ENCODE measurements at regions of chr2 and their contacts with region 1.

Region 1: DNA sequence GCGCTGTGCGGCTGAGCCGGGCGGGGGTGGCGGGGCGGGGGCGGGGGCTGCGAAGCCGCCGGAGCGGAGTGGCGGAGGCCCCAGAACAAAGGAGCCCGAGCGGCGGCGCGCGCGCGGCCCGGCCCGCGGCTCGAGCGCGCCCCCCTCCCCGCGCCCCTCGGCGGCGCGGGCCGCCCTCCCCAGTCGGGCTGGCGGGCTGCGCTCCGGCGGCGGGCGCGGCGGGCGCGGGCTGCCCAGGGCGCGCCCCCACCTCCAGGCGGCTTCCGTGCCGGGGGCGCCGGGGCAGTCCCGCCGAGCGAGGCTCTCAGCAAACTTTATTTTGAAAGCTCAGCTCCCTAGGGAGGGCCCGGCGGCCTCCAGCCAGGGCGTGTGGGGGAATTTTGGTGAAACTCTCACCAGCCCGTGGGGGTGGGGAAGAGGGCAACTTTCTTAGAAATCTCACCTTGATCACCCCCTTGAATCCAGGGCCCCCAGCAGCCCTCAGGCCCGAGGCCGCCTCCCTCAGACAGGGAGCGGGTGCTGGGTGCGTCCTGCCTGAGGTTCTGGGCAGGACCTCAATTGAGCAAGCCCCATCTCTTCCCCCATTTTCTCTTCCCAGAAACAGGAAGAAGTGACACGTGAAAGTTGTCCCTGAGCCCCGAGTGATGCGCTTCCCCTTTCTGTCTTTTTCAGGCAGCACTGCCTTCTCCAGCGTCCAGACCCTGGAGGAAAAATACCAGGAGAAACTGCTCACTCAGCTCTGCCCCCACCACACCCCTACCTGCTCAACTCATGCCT is 786 bp downstream of the TET3 start:
- DNase-seq: peak in 9 of 10 donors; percentile 33 to 77 (median 58)
- ATAC-seq: peak; percentile 48 to 49
- H3K4me3 Mint-ChIP-seq: peak overlapping the region; percentile 78 to 91 (median 86)
- H3K27ac Mint-ChIP-seq: peak overlapping the region; percentile 66 to 95 (median 86)
- H3K4me1 Mint-ChIP-seq: peaks cover 55 to 85% (median 82%) of the 10 kb centered on the region in 4 donors
- H3K27me3 Mint-ChIP-seq: no peaks in the 10 kb centered on the region

Region 2: GRCh38 chr2:73926493-73927338 is 58.8 kb before region 1 on chr2 and contains the start of gene DGUOK:
- POLR2A ChIA-PET with region 1: interaction called, 21 read pairs
- DNase-seq: peak; percentile 86 to 99 (median 98)
- ATAC-seq: peak; percentile 95 to 98
- H3K4me3 Mint-ChIP-seq: peak within 1 kb of the TSS; percentile 79 to 95 (median 92)
- H3K27ac Mint-ChIP-seq: peak within 1 kb of the TSS; percentile 90 to 99 (median 98)
- H3K4me1 Mint-ChIP-seq: peaks cover 26 to 63% (median 55%) of the 10 kb centered on the region in 4 donors
- H3K27me3 Mint-ChIP-seq: no peaks in the 10 kb centered on the region
- polyA plus RNA-seq, gene DGUOK: 207 to 219 (median 215) TPM

Region 3: GRCh38 chr2:73970850-73971471 is 14.5 kb before region 1 on chr2:
- POLR2A ChIA-PET with region 1: interaction called, 17 read pairs
- DNase-seq: peak; percentile 39 to 85 (median 72)
- ATAC-seq: peak; percentile 84 to 88
- H3K4me3 Mint-ChIP-seq: peak overlapping the region; percentile 65 to 90 (median 80)
- H3K27ac Mint-ChIP-seq: peak overlapping the region; percentile 89 to 98 (median 94)
- H3K4me1 Mint-ChIP-seq: peaks cover 36 to 80% (median 77%) of the 10 kb centered on the region in 4 donors
- H3K27me3 Mint-ChIP-seq: no peaks in the 10 kb centered on the region

Region 4: GRCh38 chr2:74002487-74003391 is 17.2 kb after region 1 on chr2:
- POLR2A ChIA-PET with region 1: interaction called, 23 read pairs
- DNase-seq: peak; percentile 71 to 86 (median 80)
- ATAC-seq: peak; percentile 85 to 93
- H3K4me3 Mint-ChIP-seq: peak overlapping the region; percentile 70 to 89 (median 83)
- H3K27ac Mint-ChIP-seq: peak overlapping the region in 7 of 10 donors; percentile 19 to 90 (median 66)
- H3K4me1 Mint-ChIP-seq: peaks cover 53 to 92% (median 88%) of the 10 kb centered on the region in 4 donors
- H3K27me3 Mint-ChIP-seq: no peaks in the 10 kb centered on the region

Region 5: DNA sequence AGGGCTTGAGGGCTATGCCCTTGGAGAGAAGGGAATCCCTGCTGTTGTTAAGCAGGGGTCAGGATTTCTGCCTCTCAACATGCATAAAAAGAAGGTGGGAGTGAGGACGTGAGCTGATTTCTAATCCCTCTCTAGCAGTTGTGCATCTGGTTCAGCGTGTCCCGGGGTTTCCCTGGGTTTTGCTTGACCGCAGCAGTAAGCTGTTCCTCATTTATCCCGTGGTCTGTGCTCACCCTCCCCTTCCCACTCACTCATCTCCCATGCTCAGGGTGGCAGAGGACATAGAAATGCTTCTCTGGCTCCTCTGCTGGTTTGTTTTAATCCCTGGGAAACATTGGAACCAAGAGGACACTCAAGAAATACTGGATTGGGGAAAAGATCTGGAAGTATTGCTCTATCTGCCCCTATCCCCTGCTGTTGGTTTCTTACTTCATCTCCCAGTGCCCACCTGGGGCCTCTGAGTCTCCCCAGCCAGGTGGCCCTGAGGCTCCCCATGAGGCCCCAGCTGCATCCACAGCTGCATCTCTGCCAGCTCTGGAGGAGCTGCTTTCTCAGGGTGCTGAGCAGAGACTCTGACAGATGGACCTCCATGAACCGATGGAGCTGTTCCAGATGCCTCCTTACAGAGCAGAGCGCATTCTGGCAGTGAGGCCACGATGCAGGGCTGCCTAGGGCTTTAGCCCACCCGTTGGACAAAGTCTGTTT is 35.4 kb after region 1 on chr2:
- POLR2A ChIA-PET with region 1: no interaction called
- DNase-seq: no peak
- ATAC-seq: peak in 1 of 2 donors; percentile 35
- H3K4me3 Mint-ChIP-seq: peak overlapping the region in 3 of 10 donors; percentile 11 to 45 (median 43)
- H3K27ac Mint-ChIP-seq: peak overlapping the region in 8 of 10 donors; percentile 58 to 86 (median 78)
- H3K4me1 Mint-ChIP-seq: peaks cover 22 to 75% (median 65%) of the 10 kb centered on the region in 4 donors
- H3K27me3 Mint-ChIP-seq: no peaks in the 10 kb centered on the region

Measured in naive thymus-derived CD8-positive, alpha-beta T cell (primary cell).